Activated CD4-positive, alpha-beta memory T cell treated with anti-CD3 and anti-CD28 coated beads for 36 hours (primary cell): ENCODE measurements at regions of chr1 and their contacts with region 1.

Region 1: DNA sequence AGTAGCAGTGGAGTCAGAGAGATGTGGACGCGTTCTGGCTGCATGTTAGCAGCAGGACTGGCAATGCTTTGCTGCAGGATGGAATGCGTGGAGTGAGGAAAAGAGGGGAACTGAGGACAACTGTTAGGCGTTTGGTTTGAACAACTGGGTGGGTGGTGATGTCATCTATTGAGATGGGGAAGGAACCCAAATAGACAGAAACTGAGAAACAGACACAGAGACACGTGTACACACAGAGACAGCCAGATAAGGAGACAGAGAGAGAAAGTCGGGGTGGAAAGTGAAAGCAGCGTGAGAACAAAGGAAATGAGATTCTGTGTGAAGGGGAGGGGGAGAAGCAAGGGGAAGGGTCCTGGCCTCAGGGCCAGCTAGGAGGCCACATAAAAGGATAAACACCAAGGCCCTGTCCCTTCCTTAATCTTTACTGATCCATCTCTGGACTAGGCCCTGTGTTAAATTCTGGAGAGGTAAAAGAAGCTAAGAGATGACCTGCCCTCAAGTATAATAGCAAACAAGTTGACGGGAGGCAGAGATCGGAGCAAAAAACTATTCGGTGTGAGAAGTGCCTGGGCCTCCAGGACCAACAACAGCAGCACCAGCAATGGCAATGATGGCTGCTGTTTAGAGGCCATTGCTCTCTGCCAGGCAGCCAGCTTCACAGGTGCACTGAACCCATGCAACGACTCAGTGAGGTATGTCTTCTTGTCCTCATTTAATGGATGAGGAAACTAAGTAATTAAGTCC is 31.6 kb downstream of the VWA5B1 start:
- DNase-seq: peak; percentile 52
- H3K4me3 Mint-ChIP-seq: peak overlapping the region; percentile 53
- H3K27ac Mint-ChIP-seq: peak overlapping the region; percentile 81
- H3K4me1 Mint-ChIP-seq: peaks cover 33% of the 10 kb centered on the region
- H3K27me3 Mint-ChIP-seq: peaks cover 16% of the 10 kb centered on the region

Region 2: DNA sequence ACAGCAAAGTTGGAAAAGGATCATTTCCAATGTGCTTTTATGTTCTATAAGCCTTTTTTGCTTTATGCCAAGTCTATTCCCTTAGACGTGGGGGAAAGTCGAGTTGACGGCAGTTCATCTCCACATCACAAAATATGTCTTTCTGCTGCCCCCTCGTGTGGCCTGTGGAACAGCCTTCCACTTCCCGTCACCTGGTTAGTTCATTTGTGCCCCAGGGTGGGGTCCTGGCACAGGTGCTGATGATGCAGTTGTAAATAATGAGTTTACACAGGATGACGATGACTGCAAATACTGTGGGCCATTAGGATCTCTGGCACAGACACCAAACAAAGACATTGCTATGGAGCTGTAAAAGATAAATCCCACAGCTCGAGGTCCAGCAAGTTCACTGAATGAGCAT is 450.1 kb before region 1 on chr1:
- CTCF ChIA-PET with region 1: no interaction called
- POLR2A ChIA-PET with region 1: no interaction called
- intact Hi-C with region 1: no loop called
- DNase-seq: no peak
- H3K4me3 Mint-ChIP-seq: no peak overlapping the region
- H3K27ac Mint-ChIP-seq: no peak overlapping the region
- H3K4me1 Mint-ChIP-seq: no peaks in the 10 kb centered on the region
- H3K27me3 Mint-ChIP-seq: peaks cover 40% of the 10 kb centered on the region

Region 3: GRCh38 chr1:20185834-20186782 is 136.1 kb before region 1 on chr1 and contains the starts of genes PLA2G2C and UBXN10:
- CTCF ChIA-PET with region 1: no interaction called
- POLR2A ChIA-PET with region 1: no interaction called
- intact Hi-C with region 1: loop called (anchors 5 kb)
- DNase-seq: peak; percentile 88
- H3K4me3 Mint-ChIP-seq: peak within 1 kb of the TSS; percentile 77
- H3K27ac Mint-ChIP-seq: peak within 1 kb of the TSS; percentile 74
- H3K4me1 Mint-ChIP-seq: peaks cover 41% of the 10 kb centered on the region
- H3K27me3 Mint-ChIP-seq: peaks cover 21% of the 10 kb centered on the region
- total RNA-seq, gene PLA2G2C: 0.43 to 0.44 TPM
- total RNA-seq, gene UBXN10: 0.53 to 0.55 TPM

Region 4: DNA sequence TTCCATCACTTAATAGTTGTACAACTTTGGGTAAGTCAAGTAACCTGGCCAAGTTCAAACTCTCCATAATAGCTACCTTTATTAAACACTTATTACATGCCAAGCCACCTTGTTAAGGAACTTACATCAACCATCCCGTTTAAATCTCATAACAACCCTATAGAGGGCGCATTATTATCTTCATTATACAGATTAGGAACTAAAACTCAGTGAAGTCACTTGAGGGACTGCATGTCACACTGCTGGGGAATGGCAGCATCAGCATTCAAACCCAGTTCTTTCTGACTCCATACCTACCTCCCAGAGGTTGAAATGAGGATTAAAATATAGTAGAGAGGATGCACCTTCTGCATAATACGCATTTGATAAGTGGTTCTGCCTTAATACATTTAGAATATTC is 88.9 kb before region 1 on chr1:
- CTCF ChIA-PET with region 1: no interaction called
- POLR2A ChIA-PET with region 1: no interaction called
- intact Hi-C with region 1: loop called (anchors 5 kb)
- DNase-seq: no peak
- H3K4me3 Mint-ChIP-seq: no peak overlapping the region
- H3K27ac Mint-ChIP-seq: no peak overlapping the region
- H3K4me1 Mint-ChIP-seq: no peaks in the 10 kb centered on the region
- H3K27me3 Mint-ChIP-seq: peaks cover 41% of the 10 kb centered on the region

Region 5: GRCh38 chr1:20248971-20249612 is 73.2 kb before region 1 on chr1:
- CTCF ChIA-PET with region 1: interaction called, 4 read pairs
- POLR2A ChIA-PET with region 1: no interaction called
- intact Hi-C with region 1: loop called (anchors 1 kb)
- DNase-seq: peak; percentile 67
- H3K4me3 Mint-ChIP-seq: no peak overlapping the region
- H3K27ac Mint-ChIP-seq: peak overlapping the region; percentile 85
- H3K4me1 Mint-ChIP-seq: peaks cover 23% of the 10 kb centered on the region
- H3K27me3 Mint-ChIP-seq: no peaks in the 10 kb centered on the region

Region 6: DNA sequence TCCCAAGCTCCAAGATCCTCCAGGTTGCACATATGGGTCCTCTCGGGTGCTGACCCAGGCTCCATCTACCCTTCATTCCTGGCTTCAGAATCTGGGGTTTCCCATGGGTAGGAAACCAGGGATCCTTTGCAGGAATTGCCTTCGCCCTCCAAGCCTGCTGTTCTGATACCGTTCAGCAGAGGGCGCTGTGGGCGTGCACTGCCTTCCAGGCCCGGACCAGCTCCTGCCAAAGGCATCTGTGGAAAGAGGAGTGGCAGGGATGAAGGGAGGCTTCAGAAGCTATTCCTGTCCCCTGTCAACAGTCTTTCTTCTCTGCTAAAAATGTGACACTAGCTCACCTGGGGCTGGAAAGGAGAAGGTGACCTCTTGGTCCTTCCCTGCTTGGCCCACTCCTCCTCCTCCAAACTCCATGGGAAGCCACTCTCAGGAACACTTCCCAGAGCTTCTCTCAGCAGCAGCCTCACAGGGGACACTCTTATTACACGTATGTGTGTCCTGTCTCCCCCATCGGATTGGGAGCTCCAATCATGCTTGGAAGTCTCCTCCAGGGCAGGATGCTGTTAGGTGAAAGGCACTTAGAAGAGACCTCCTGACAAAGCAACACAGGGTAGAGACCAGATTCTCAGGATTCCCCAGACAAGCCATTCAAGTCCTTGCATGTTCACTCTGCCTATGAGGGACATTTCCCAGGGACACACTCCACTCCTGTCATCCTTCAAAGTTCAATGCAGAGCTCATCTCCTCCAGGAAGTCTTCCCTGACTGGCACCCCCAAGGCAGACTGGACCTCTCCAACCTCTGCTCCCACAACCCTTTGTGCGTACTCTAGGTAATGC is 39.8 kb after region 1 on chr1:
- CTCF ChIA-PET with region 1: interaction called, 3 read pairs
- POLR2A ChIA-PET with region 1: no interaction called
- intact Hi-C with region 1: loop called (anchors 1 kb)
- DNase-seq: peak; percentile 56
- H3K4me3 Mint-ChIP-seq: no peak overlapping the region
- H3K27ac Mint-ChIP-seq: no peak overlapping the region
- H3K4me1 Mint-ChIP-seq: peaks cover 12% of the 10 kb centered on the region
- H3K27me3 Mint-ChIP-seq: peaks cover 63% of the 10 kb centered on the region